PC-3 (cell line): ENCODE measurements at regions of chr14 and their contacts with region 1.

Region 1: DNA sequence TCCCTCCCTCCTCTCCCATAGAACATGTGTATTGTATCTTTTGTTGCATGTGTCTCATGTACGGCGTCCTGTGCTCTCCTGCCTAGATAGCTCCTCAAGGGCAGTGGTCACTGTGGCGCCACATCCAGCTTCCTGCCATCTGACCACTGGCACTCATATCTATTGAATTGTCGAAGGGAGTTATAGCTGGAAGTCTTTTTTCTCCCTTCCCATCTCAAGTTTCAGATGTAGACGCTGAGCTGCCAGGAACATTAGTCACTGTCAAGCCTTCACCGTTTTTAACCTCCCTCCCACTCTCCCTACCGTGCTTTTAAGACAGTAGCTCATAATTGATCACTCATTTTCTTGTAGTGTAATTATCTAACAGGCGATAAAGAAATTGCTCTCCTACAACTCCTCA is 33.0 kb downstream of the MTHFD1 start:
- DNase-seq: peak; percentile 89
- ATAC-seq: peak; percentile 96
- H3K4me3 ChIP-seq: no peak overlapping the region
- H3K27ac ChIP-seq: peak overlapping the region; percentile 44
- H3K4me1 ChIP-seq: peaks cover 14% of the 10 kb centered on the region
- H3K27me3 ChIP-seq: no peaks in the 10 kb centered on the region
- CTCF ChIP-seq: no peak

Region 2: GRCh38 chr14:64387694-64388532 is 33.3 kb before region 1 on chr14 and contains the start of gene MTHFD1:
- CTCF ChIA-PET with region 1: no interaction called
- POLR2A ChIA-PET with region 1: interaction called, 20 read pairs
- intact Hi-C with region 1: no loop called
- DNase-seq: peak; percentile 99
- ATAC-seq: peak; percentile 84
- H3K4me3 ChIP-seq: peak within 1 kb of the TSS; percentile 80
- H3K27ac ChIP-seq: peak within 1 kb of the TSS; percentile 48
- H3K4me1 ChIP-seq: peaks cover 11% of the 10 kb centered on the region; the same call in 1 of the 2 replicates
- H3K27me3 ChIP-seq: no peaks in the 10 kb centered on the region
- CTCF ChIP-seq: no peak
- total RNA-seq, gene MTHFD1: 89.3 and 103 TPM in 2 replicates

Region 3: DNA sequence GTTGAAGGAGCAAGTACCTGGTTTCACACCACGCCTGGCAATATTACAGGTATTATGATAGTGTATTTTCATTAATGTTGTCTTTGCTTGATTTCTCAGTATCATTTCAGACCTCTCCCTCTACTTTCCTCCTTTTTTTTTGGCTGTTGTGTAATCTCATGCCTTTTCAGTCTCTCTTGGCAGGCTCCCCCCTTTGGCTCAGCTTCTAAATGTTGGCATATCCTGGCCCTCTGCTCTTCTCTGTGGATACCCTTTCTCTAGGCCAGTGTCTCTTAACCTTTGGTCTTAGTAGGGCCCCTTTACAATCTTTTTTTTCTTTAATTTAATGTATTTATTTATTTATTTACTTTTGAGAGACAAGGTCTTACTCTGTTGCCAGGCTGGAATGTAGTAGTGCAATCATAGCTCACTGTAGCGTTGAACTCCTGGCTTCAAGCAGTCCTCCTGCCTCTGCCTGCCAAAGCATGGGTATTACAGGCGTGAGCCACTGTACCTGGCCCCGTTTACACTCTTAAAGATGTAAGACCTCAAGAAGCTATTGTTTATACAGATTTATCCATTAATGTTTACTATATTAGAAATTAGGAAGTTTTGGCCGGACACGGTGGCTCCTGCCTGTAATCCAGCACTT is 20.2 kb before region 1 on chr14:
- CTCF ChIA-PET with region 1: interaction called, 6 read pairs
- POLR2A ChIA-PET with region 1: no interaction called
- intact Hi-C with region 1: loop called (anchors 2 kb)
- DNase-seq: no peak
- ATAC-seq: no peak
- H3K4me3 ChIP-seq: no peak overlapping the region
- H3K27ac ChIP-seq: no peak overlapping the region
- H3K4me1 ChIP-seq: no peaks in the 10 kb centered on the region
- H3K27me3 ChIP-seq: no peaks in the 10 kb centered on the region
- CTCF ChIP-seq: no peak

Region 4: GRCh38 chr14:64434528-64434927 is 13.4 kb after region 1 on chr14:
- CTCF ChIA-PET with region 1: interaction called, 26 read pairs
- POLR2A ChIA-PET with region 1: no interaction called
- intact Hi-C with region 1: no loop called
- DNase-seq: no peak
- ATAC-seq: no peak
- H3K4me3 ChIP-seq: no peak overlapping the region
- H3K27ac ChIP-seq: no peak overlapping the region
- H3K4me1 ChIP-seq: peaks cover 11% of the 10 kb centered on the region
- H3K27me3 ChIP-seq: no peaks in the 10 kb centered on the region
- CTCF ChIP-seq: no peak

Region 5: DNA sequence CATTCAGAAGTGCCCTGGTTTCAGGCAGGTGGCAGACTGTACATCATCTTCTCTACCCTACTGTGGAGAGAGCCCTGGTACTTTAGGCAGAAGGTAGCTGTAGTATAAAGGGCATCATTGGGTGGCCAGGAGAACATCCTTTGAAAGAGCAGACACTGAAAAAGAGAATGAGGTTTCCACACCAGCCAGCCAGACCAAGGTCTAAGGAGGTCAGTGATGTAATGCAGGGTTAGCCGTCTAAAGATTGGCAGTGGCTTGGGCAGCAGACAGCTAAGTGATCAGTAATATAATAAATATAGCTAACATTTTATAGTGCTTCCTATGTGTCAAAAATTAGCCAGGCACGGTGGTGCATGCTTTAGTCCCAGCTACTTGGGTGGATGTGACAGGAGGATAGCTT is 70.5 kb after region 1 on chr14:
- CTCF ChIA-PET with region 1: interaction called, 13 read pairs
- POLR2A ChIA-PET with region 1: no interaction called
- intact Hi-C with region 1: no loop called
- DNase-seq: no peak
- ATAC-seq: no peak
- H3K4me3 ChIP-seq: no peak overlapping the region
- H3K27ac ChIP-seq: no peak overlapping the region
- H3K4me1 ChIP-seq: no peaks in the 10 kb centered on the region
- H3K27me3 ChIP-seq: no peaks in the 10 kb centered on the region
- CTCF ChIP-seq: no peak

Region 6: GRCh38 chr14:64636208-64636979 is 215.2 kb after region 1 on chr14:
- CTCF ChIA-PET with region 1: no interaction called
- POLR2A ChIA-PET with region 1: no interaction called
- intact Hi-C with region 1: loop called (anchors 10 kb)
- DNase-seq: peak; percentile 87
- ATAC-seq: peak; percentile 93
- H3K4me3 ChIP-seq: no peak overlapping the region
- H3K27ac ChIP-seq: no peak overlapping the region
- H3K4me1 ChIP-seq: peaks cover 11% of the 10 kb centered on the region; the same call in 1 of the 2 replicates
- H3K27me3 ChIP-seq: no peaks in the 10 kb centered on the region
- CTCF ChIP-seq: peak; percentile 93